ENCODE measurements at regions of chr11 and their contacts with region 1.

Region 1: GRCh38 chr11:78645226-78646202 is 70.8 kb upstream of the NARS2 start:
- DNase-seq: peak; percentile 73
- H3K4me3 ChIP-seq: no peak overlapping the region
- H3K27ac ChIP-seq: no peak overlapping the region
- H3K4me1 ChIP-seq: no peaks in the 10 kb centered on the region
- CTCF ChIP-seq: peak; percentile 94

Region 2: DNA sequence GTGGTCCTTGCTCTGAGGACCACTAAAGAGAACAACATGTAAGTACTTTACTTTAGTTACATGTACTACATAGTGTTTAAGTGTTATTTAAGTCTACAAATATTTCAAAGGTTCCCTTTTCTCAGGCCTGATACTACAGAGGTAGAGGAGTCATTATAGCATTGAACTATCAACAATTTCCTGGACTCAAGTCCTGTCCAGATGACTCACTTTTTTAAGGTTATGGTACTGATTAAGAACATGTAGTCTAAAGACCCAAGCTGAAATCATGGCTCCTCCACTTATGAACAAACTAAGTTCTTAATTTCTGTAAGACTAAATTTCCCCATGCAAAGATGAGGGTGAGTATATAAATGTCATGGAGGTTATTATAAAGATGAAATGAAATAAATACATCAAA is 145.5 kb before region 1 on chr11:
- CTCF ChIA-PET with region 1: no interaction called
- POLR2A ChIA-PET with region 1: no interaction called
- intact Hi-C with region 1: no loop called
- DNase-seq: no peak
- H3K4me3 ChIP-seq: no peak overlapping the region
- H3K27ac ChIP-seq: no peak overlapping the region
- H3K4me1 ChIP-seq: no peaks in the 10 kb centered on the region
- CTCF ChIP-seq: no peak

Region 3: GRCh38 chr11:78659326-78660270 is 14.1 kb after region 1 on chr11:
- CTCF ChIA-PET with region 1: no interaction called
- POLR2A ChIA-PET with region 1: no interaction called
- intact Hi-C with region 1: no loop called
- DNase-seq: no peak
- H3K4me3 ChIP-seq: no peak overlapping the region
- H3K27ac ChIP-seq: no peak overlapping the region
- H3K4me1 ChIP-seq: no peaks in the 10 kb centered on the region
- CTCF ChIP-seq: no peak

Region 4: DNA sequence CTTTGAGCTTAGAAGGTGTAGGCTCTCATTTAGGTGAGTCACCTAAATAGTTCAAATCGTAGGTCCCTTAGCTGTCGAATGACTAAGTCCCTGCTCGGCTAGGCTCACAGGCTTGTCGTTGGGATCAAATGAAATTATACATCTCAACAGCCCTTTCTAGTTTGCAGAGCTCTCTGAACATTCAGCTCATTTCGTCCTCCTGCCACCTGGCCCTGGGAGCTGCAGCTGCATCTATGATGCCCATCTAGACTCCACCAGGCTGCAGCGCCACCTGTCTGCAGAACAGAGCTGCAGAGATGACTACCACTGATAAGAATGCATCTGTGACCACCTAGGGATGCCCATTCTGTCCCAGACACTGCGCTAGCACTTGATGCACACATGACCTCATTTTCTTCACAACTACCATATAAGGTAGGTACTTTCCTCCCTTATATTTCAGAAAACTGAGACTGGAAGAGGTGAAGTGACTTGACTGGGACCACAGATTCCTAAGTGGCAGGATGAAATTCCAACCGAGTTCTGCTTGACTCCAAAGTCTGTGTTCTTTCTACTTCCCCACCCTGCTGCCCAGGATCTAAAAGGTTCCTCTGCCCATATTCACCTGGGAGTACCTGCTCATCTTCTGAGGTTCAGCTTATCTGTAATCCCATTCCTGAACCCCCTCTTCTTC is 70.3 kb after region 1 on chr11:
- CTCF ChIA-PET with region 1: interaction called, 12 read pairs
- POLR2A ChIA-PET with region 1: interaction called, 6 read pairs
- intact Hi-C with region 1: loop called (anchors 1 kb)
- DNase-seq: peak; percentile 45
- H3K4me3 ChIP-seq: no peak overlapping the region
- H3K27ac ChIP-seq: no peak overlapping the region
- H3K4me1 ChIP-seq: no peaks in the 10 kb centered on the region
- CTCF ChIP-seq: peak; percentile 82

Region 5: GRCh38 chr11:78798660-78799059 is 153.1 kb after region 1 on chr11:
- CTCF ChIA-PET with region 1: no interaction called
- POLR2A ChIA-PET with region 1: no interaction called
- intact Hi-C with region 1: loop called (anchors 10 kb)
- DNase-seq: peak; percentile 46
- H3K4me3 ChIP-seq: no peak overlapping the region
- H3K27ac ChIP-seq: no peak overlapping the region
- H3K4me1 ChIP-seq: no peaks in the 10 kb centered on the region
- CTCF ChIP-seq: peak; percentile 85

Region 6: GRCh38 chr11:79076526-79077115 is 431.1 kb after region 1 on chr11:
- CTCF ChIA-PET with region 1: no interaction called
- POLR2A ChIA-PET with region 1: no interaction called
- intact Hi-C with region 1: loop called (anchors 10 kb)
- DNase-seq: peak; percentile 24
- H3K4me3 ChIP-seq: no peak overlapping the region
- H3K27ac ChIP-seq: no peak overlapping the region
- H3K4me1 ChIP-seq: no peaks in the 10 kb centered on the region
- CTCF ChIP-seq: peak; percentile 74

Region 7: GRCh38 chr11:79100093-79100910 is 454.8 kb after region 1 on chr11:
- CTCF ChIA-PET with region 1: interaction called, 15 read pairs
- POLR2A ChIA-PET with region 1: no interaction called
- intact Hi-C with region 1: loop called (anchors 1 kb)
- DNase-seq: peak; percentile 53
- H3K4me3 ChIP-seq: no peak overlapping the region
- H3K27ac ChIP-seq: no peak overlapping the region
- H3K4me1 ChIP-seq: no peaks in the 10 kb centered on the region
- CTCF ChIP-seq: peak; percentile 80

Region 8: GRCh38 chr11:79493555-79494171 is 848.1 kb after region 1 on chr11:
- CTCF ChIA-PET with region 1: no interaction called
- POLR2A ChIA-PET with region 1: no interaction called
- intact Hi-C with region 1: loop called (anchors 2 kb)
- DNase-seq: peak; percentile 52
- H3K4me3 ChIP-seq: no peak overlapping the region
- H3K27ac ChIP-seq: no peak overlapping the region
- H3K4me1 ChIP-seq: no peaks in the 10 kb centered on the region
- CTCF ChIP-seq: peak; percentile 87